CD8-positive, alpha-beta T cell (primary cell): ENCODE measurements at regions of chr1 and their contacts with region 1.

Region 1: GRCh38 chr1:25997828-25998761 is at the start of gene PAFAH2:
- DNase-seq: peak; percentile 93 to 100 (median 96)
- ATAC-seq: peak; percentile 96
- H3K4me3 ChIP-seq: peak within 1 kb of the TSS; percentile 62 to 72
- H3K4me3 Mint-ChIP-seq: peak within 1 kb of the TSS; percentile 92
- H3K27ac ChIP-seq: peak within 1 kb of the TSS; percentile 79 to 87
- H3K27ac Mint-ChIP-seq: peak within 1 kb of the TSS; percentile 99
- H3K4me1 ChIP-seq: peaks cover 19% of the 10 kb centered on the region
- H3K4me1 Mint-ChIP-seq: peaks cover 42% of the 10 kb centered on the region
- H3K27me3 ChIP-seq: no peaks in the 10 kb centered on the region
- H3K27me3 Mint-ChIP-seq: no peaks in the 10 kb centered on the region
- CTCF ChIP-seq: peak; percentile 92
- total RNA-seq, gene PAFAH2: 9.1 to 11.8 TPM

Region 2: DNA sequence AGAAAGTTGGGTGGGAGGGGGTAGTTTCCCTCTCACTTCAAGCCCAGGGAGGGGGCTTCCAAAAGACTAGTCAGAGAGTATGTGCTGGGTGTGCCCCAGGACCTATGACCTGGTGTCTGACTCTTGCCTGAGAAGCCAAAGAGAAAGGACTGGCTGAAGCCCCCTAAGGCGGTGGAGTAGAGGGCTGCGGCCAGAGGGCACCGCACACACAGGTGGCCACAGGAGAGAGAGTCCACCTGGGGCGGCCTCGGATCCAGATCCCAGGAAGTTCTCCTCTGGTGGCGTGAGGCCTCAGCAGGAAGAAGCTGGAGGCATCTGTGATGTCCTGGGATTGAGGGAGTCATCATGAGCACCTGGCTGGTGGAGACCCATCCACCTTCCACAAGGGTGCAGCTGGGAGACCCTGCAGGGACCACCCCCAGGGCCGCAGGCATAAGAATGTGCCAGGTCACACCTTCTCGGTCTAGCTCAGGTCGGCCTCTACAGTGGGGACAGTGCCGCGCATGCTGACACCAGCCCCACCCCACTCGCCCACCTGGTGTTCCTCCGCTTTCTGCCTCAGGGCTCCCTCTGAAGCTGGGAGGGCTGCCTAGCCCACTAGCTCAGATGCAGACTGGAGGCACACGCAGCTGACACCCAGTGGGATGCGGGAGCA is 117.0 kb before region 1 on chr1:
- CTCF ChIA-PET with region 1: interaction called, 13 read pairs
- POLR2A ChIA-PET with region 1: interaction called, 4 read pairs
- intact Hi-C with region 1: no loop called
- DNase-seq: no peak
- ATAC-seq: no peak
- H3K4me3 ChIP-seq: no peak overlapping the region
- H3K4me3 Mint-ChIP-seq: no peak overlapping the region
- H3K27ac ChIP-seq: no peak overlapping the region
- H3K27ac Mint-ChIP-seq: no peak overlapping the region
- H3K4me1 ChIP-seq: no peaks in the 10 kb centered on the region
- H3K4me1 Mint-ChIP-seq: peaks cover under 1% of the 10 kb centered on the region
- H3K27me3 ChIP-seq: no peaks in the 10 kb centered on the region
- H3K27me3 Mint-ChIP-seq: no peaks in the 10 kb centered on the region
- CTCF ChIP-seq: no peak

Region 3: GRCh38 chr1:25922056-25922969 is 75.8 kb before region 1 on chr1:
- CTCF ChIA-PET with region 1: interaction called, 6 read pairs
- POLR2A ChIA-PET with region 1: interaction called, 12 read pairs
- intact Hi-C with region 1: no loop called
- DNase-seq: peak in 7 of 9 experiments; percentile 38 to 78 (median 62)
- ATAC-seq: peak; percentile 75
- H3K4me3 ChIP-seq: peak overlapping the region; percentile 57 to 63
- H3K4me3 Mint-ChIP-seq: peak overlapping the region; percentile 88
- H3K27ac ChIP-seq: peak overlapping the region; percentile 6 to 24
- H3K27ac Mint-ChIP-seq: peak overlapping the region; percentile 70
- H3K4me1 ChIP-seq: peaks cover 27% of the 10 kb centered on the region
- H3K4me1 Mint-ChIP-seq: peaks cover 29% of the 10 kb centered on the region
- H3K27me3 ChIP-seq: no peaks in the 10 kb centered on the region
- H3K27me3 Mint-ChIP-seq: no peaks in the 10 kb centered on the region
- CTCF ChIP-seq: no peak

Region 4: GRCh38 chr1:25971066-25971810 is 26.9 kb before region 1 on chr1:
- CTCF ChIA-PET with region 1: interaction called, 17 read pairs
- POLR2A ChIA-PET with region 1: interaction called, 8 read pairs
- intact Hi-C with region 1: loop called in 1 of 2 experiments (anchors 1 kb)
- DNase-seq: peak in 4 of 9 experiments; percentile 22 to 61 (median 40)
- ATAC-seq: peak; percentile 75
- H3K4me3 ChIP-seq: no peak overlapping the region
- H3K4me3 Mint-ChIP-seq: peak overlapping the region; percentile 56
- H3K27ac ChIP-seq: peak overlapping the region in 1 of 2 experiments; percentile 55
- H3K27ac Mint-ChIP-seq: peak overlapping the region; percentile 88
- H3K4me1 ChIP-seq: peaks cover 20% of the 10 kb centered on the region
- H3K4me1 Mint-ChIP-seq: peaks cover 31% of the 10 kb centered on the region
- H3K27me3 ChIP-seq: no peaks in the 10 kb centered on the region
- H3K27me3 Mint-ChIP-seq: no peaks in the 10 kb centered on the region
- CTCF ChIP-seq: no peak